ENCODE measurements at regions of chr6 and their contacts with region 1.

Region 1: GRCh38 chr6:137341681-137342195 is 122.6 kb upstream of the IFNGR1 start:
- DNase-seq: peak; percentile 69
- H3K4me3 Mint-ChIP-seq: peak overlapping the region; percentile 12
- H3K27ac Mint-ChIP-seq: no peak overlapping the region
- H3K4me1 Mint-ChIP-seq: peaks cover 7% of the 10 kb centered on the region
- H3K27me3 Mint-ChIP-seq: no peaks in the 10 kb centered on the region

Region 2: GRCh38 chr6:137363805-137364138 is 22.0 kb after region 1 on chr6:
- CTCF ChIA-PET with region 1: interaction called, 5 read pairs
- intact Hi-C with region 1: loop called (anchors 2 kb)
- DNase-seq: no peak
- H3K4me3 Mint-ChIP-seq: no peak overlapping the region
- H3K27ac Mint-ChIP-seq: no peak overlapping the region
- H3K4me1 Mint-ChIP-seq: peaks cover 19% of the 10 kb centered on the region
- H3K27me3 Mint-ChIP-seq: no peaks in the 10 kb centered on the region

Region 3: GRCh38 chr6:137389150-137389704 is 47.5 kb after region 1 on chr6:
- CTCF ChIA-PET with region 1: no interaction called
- intact Hi-C with region 1: loop called (anchors 1 kb)
- DNase-seq: peak; percentile 93
- H3K4me3 Mint-ChIP-seq: no peak overlapping the region
- H3K27ac Mint-ChIP-seq: peak overlapping the region; percentile 10
- H3K4me1 Mint-ChIP-seq: peaks cover 36% of the 10 kb centered on the region
- H3K27me3 Mint-ChIP-seq: no peaks in the 10 kb centered on the region

Region 4: GRCh38 chr6:137497721-137498463 is 156.2 kb after region 1 on chr6:
- CTCF ChIA-PET with region 1: no interaction called
- intact Hi-C with region 1: loop called (anchors 10 kb)
- DNase-seq: no peak
- H3K4me3 Mint-ChIP-seq: peak overlapping the region; percentile 68
- H3K27ac Mint-ChIP-seq: no peak overlapping the region
- H3K4me1 Mint-ChIP-seq: peaks cover 46% of the 10 kb centered on the region
- H3K27me3 Mint-ChIP-seq: peaks cover 63% of the 10 kb centered on the region

Measured in activated naive CD4-positive, alpha-beta T cell treated with anti-CD3 and anti-CD28 coated beads for 36 hours (primary cell).